ENCODE measurements at regions of chr11 and their contacts with region 1.

Region 1: DNA sequence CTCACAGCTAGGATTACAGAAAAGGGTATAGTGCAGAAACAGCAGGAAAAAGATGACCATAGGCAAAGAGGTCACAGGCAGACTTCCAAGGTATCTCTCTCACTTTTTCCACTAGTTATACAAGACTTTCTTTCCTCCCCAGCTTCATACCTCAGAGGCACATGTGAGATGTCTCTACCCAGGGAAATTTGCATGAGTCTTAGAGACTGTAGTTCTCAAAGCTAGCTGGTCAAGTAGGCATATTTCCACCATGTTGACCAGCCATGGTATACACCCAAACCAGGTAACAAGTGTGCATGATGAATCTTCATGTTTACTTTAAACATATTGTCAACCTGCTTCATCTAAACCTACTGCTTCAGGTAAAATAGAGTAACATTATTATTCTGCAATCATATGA is 27.9 kb downstream of the PRMT3 start:
- DNase-seq: no peak
- ATAC-seq: no peak
- H3K4me3 ChIP-seq: no peak overlapping the region
- H3K27ac ChIP-seq: no peak overlapping the region
- H3K4me1 ChIP-seq: no peaks in the 10 kb centered on the region
- CTCF ChIP-seq: no peak
- EP300 ChIP-seq: no peak
- POLR2A ChIP-seq: no peak
- RAD21 ChIP-seq: no peak

Region 2: GRCh38 chr11:20125927-20126326 is 289.5 kb before region 1 on chr11:
- CTCF ChIA-PET with region 1: no interaction called
- POLR2A ChIA-PET with region 1: no interaction called
- DNase-seq: peak; percentile 25 to 29
- ATAC-seq: peak; percentile 31 to 33; a peak in 3 of 6 replicates
- H3K4me3 ChIP-seq: no peak overlapping the region
- H3K27ac ChIP-seq: peak overlapping the region; percentile 51 to 75; a peak in 5 of 6 replicates
- H3K4me1 ChIP-seq: peaks cover 12% of the 10 kb centered on the region; the same call in 2 of the 3 replicates
- CTCF ChIP-seq: no peak
- EP300 ChIP-seq: 0 out of 5 replicates have a peak, but pooled peaks of 1 of the 2 experiments have one; percentile 15
- POLR2A ChIP-seq: no peak
- RAD21 ChIP-seq: no peak

Region 3: DNA sequence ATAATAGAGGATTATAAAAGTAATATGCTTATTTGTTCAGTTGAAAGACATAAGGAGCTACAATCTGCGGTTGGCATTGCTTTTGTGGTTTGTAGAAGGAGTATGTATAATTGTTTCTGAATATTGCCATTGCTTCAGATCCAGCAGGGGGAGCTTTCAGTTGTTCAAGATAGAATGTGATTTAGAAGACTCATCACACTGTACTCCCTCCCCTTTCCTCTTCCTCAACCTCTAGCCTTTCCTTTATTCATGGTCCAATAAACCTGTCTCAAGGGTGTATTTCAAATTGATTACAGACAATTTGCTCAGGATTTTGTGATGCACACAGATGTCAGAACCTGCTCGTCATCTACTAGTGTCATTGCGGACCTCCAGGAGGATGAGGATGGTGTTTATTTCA is 18.2 kb before region 1 on chr11:
- CTCF ChIA-PET with region 1: interaction called, 12 read pairs
- POLR2A ChIA-PET with region 1: no interaction called
- DNase-seq: peak; percentile 38 to 69
- ATAC-seq: peak; percentile 96 to 99
- H3K4me3 ChIP-seq: no peak overlapping the region
- H3K27ac ChIP-seq: no peak overlapping the region
- H3K4me1 ChIP-seq: no peaks in the 10 kb centered on the region
- CTCF ChIP-seq: peak; percentile 67
- EP300 ChIP-seq: no peak
- POLR2A ChIP-seq: no peak
- RAD21 ChIP-seq: peak; percentile 41 to 51; a peak in 4 of 5 replicates

Region 4: DNA sequence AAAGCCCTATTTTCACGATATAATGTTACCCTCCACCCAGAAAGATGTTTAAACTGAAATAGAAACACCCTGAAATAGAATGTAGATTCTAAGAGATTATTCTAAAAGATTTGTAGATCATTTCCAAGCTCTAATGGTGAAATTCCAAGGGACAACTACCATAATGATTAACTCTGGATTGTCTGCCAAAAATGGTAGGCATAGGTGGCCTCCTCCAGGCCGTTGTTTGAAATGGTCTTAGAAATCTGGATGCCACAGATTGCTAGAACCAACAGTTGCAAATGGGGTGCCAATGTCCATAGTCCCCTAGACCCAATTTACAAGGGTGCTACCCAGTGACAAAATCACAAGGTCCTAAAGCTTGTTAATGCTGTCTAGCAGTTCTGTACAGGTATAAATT is 177.3 kb after region 1 on chr11:
- CTCF ChIA-PET with region 1: no interaction called
- POLR2A ChIA-PET with region 1: no interaction called
- DNase-seq: no peak
- ATAC-seq: no peak
- H3K4me3 ChIP-seq: no peak overlapping the region
- H3K27ac ChIP-seq: no peak overlapping the region
- H3K4me1 ChIP-seq: no peaks in the 10 kb centered on the region
- CTCF ChIP-seq: no peak
- EP300 ChIP-seq: no peak
- POLR2A ChIP-seq: no peak
- RAD21 ChIP-seq: peak; percentile 13 to 20; a peak in 1 of 5 replicates

Measured in A549 (cell line).